ENCODE measurements at regions of chr14 and their contacts with region 1.

Region 1: GRCh38 chr14:64891839-64892375 is 12.2 kb upstream of the SPTB start:
- DNase-seq: peak; percentile 56
- CTCF ChIP-seq: peak; percentile 54

Region 2: GRCh38 chr14:64764641-64765520 is 127.0 kb before region 1 on chr14:
- CTCF ChIA-PET with region 1: interaction called, 28 read pairs
- POLR2A ChIA-PET with region 1: no interaction called
- DNase-seq: peak; percentile 83
- CTCF ChIP-seq: peak; percentile 95

Region 3: DNA sequence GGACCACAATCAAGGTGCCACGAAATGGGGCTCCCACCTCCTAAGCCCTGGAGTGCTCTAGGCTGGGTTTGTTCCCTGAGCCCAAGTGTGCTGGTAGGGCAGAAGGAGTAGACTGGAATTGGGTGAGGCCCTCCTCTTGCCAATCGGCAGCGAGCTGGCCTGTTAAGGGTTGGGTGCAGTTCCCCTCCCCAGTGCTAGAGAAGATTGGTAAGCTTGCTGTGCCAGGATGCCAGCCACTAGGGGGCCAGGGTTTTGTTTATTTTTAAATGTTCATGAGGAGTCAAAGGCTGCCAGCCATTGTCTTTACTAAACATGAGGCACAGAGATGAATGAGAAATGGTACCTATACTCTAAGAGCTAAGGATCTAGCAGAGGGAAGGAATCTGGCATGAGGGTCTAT is 91.9 kb before region 1 on chr14:
- CTCF ChIA-PET with region 1: interaction called, 38 read pairs
- POLR2A ChIA-PET with region 1: no interaction called
- DNase-seq: no peak
- CTCF ChIP-seq: no peak

Region 4: DNA sequence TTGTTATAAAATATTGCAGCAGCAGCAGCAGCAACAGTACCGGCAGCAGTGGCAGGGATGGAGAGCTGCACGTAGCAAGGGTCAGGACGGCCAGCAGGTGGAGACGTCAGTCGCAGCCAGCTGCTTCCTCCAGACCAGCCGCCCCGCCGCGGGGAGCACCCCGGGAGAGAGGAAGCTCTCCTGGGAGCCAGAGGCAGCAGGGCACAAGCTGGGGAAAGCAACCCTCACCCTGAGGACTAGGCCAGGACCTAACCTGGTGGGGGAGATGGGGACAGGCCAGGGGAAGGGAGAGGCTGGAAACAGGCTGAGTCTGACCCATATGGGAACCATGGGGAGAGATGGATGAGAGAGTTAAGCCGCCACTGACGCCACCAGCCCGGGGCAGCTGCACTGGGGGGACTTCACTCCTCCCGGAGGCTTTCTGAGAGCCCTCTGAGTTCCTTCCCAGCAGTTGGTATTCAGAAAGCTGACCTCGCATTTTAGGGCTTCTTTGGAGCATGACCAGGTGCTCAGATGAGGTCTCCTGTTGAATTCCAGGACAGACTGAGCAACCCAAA is 68.5 kb before region 1 on chr14:
- CTCF ChIA-PET with region 1: interaction called, 203 read pairs
- POLR2A ChIA-PET with region 1: no interaction called
- DNase-seq: peak; percentile 90
- CTCF ChIP-seq: peak; percentile 85

Region 5: DNA sequence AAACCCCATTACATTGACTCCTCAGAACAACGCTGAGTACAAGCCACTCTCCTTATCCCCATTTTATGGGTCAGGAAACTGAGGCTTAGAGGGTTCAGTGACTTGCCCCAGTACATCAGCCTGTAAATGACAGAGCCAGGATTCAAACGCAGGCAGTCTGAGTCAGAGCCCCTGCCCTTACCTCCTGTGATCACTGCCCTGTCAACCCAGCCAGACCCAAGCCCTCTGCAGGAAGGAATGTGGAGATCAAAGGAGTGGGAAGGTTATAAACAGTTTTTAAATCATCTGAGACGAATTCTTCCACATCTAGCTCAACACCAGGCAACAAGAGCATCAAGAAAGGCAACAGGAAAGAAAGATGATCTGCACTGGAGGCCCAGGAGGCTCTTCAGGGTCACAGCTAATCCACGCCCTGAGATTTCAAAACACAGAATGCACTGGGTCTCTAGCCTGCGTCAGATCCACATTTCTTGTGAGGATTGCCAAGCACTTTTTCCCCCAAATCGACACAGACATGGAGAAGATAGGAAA is 50.7 kb before region 1 on chr14:
- CTCF ChIA-PET with region 1: interaction called, 14 read pairs
- POLR2A ChIA-PET with region 1: no interaction called
- DNase-seq: no peak
- CTCF ChIP-seq: no peak

Region 6: DNA sequence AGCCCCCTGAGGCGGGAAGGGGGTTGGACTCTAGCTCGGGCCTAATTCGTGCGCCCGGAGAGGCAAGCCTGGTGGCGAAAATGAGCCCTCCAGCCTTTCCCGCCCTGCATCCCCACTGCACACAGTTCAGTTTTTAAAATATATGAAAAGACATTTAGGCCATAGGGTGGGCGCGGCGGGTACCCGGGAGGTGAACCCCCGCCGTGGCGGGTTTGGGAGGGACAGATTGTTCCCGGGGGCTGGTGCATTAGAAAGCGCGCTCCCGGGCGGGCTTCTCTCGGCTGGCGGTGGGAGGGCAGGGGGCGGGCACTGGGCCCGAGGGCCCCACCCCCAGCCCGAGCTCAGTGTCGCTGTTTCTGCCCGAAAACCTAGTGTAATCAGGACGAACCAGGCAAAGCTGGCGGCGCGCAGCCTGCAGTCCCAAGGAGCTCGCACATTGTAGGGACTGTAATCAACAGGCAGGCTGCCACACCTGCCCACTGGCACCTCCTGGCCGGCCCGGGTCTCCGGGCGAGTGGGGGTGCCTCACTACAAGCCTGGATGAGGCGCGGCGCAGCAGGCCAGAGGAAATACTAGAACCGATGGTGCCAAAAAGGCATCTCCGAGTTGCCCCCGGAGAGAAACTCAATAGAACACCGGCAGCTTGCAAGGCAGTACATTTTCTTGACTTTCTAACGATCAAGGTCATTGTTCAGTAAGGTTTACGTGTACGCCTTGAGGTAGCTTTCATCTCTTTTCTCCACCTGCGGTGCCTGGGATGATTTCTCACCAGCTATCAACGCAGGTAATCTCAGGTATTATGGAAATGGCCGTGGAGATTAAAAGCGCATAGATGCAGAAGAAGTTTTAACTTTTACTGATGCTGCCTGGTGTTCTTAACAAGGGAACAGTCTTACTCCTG is 11.4 kb before region 1 on chr14:
- CTCF ChIA-PET with region 1: interaction called, 93 read pairs
- POLR2A ChIA-PET with region 1: no interaction called
- DNase-seq: peak; percentile 61
- CTCF ChIP-seq: no peak

Region 7: GRCh38 chr14:64974563-64974962 is 82.7 kb after region 1 on chr14:
- CTCF ChIA-PET with region 1: no interaction called
- POLR2A ChIA-PET with region 1: no interaction called
- DNase-seq: no peak
- CTCF ChIP-seq: no peak